ENCODE measurements at regions of chrX and their contacts with region 1.

Region 1: GRCh38 chrX:131763674-131764073 is 219.8 kb downstream of the OR13H1 start:
- DNase-seq: no peak
- ATAC-seq: peak in 6 of 8 donors; percentile 52 to 97 (median 80)
- H3K4me3 ChIP-seq: peak overlapping the region in 3 of 10 donors; percentile 39 to 54 (median 44)
- H3K27ac ChIP-seq: peak overlapping the region in 2 of 10 donors; percentile 69 to 81
- H3K4me1 ChIP-seq: peaks cover 0 to 16% (median 0%) of the 10 kb centered on the region in 9 donors
- H3K27me3 ChIP-seq: peaks cover 0 to 17% (median 0%) of the 10 kb centered on the region in 7 donors
- CTCF ChIP-seq: peak in 3 of 9 donors; percentile 18 to 62 (median 57)

Region 2: GRCh38 chrX:131792789-131793462 is 29.3 kb after region 1 on chrX:
- intact Hi-C with region 1: loop called in 1 of 10 experiments (anchors 2 kb)
- DNase-seq: peak; percentile 17 to 61
- ATAC-seq: peak; percentile 55 to 98 (median 84)
- H3K4me3 ChIP-seq: peak overlapping the region in 9 of 10 donors; percentile 19 to 53 (median 30)
- H3K27ac ChIP-seq: peak overlapping the region in 8 of 10 donors; percentile 19 to 86 (median 56)
- H3K4me1 ChIP-seq: peaks cover 0 to 6% (median 0%) of the 10 kb centered on the region in 9 donors
- H3K27me3 ChIP-seq: peaks cover 0 to 60% (median 0%) of the 10 kb centered on the region in 7 donors
- CTCF ChIP-seq: peak in 5 of 9 donors; percentile 16 to 57 (median 36)

Region 3: GRCh38 chrX:131821945-131822622 is 58.4 kb after region 1 on chrX:
- intact Hi-C with region 1: loop called in 1 of 10 experiments (anchors 2 kb)
- DNase-seq: peak in 1 of 2 donors; percentile 12
- ATAC-seq: peak; percentile 49 to 98 (median 78)
- H3K4me3 ChIP-seq: peak overlapping the region in 6 of 10 donors; percentile 13 to 55 (median 36)
- H3K27ac ChIP-seq: peak overlapping the region in 7 of 10 donors; percentile 44 to 94 (median 79)
- H3K4me1 ChIP-seq: peaks cover 0 to 33% (median 0%) of the 10 kb centered on the region in 9 donors
- H3K27me3 ChIP-seq: peaks cover 0 to 24% (median 0%) of the 10 kb centered on the region in 7 donors
- CTCF ChIP-seq: peak in 7 of 9 donors; percentile 5 to 58 (median 19)